ENCODE measurements at regions of chr22 and their contacts with region 1.

Region 1: GRCh38 chr22:17501679-17502285 is 61.5 kb upstream of the SLC25A18 start:
- DNase-seq: no peak
- ATAC-seq: peak; percentile 77 to 90
- H3K4me3 ChIP-seq: no peak overlapping the region
- H3K27ac ChIP-seq: peak overlapping the region; percentile 20 to 52 (median 32)
- H3K4me1 ChIP-seq: peaks cover 4 to 10% of the 10 kb centered on the region in 2 donors
- H3K27me3 ChIP-seq: no peaks in the 10 kb centered on the region
- CTCF ChIP-seq: peak; percentile 71 to 77 (median 74)
- POLR2A ChIP-seq: no peak

Region 2: DNA sequence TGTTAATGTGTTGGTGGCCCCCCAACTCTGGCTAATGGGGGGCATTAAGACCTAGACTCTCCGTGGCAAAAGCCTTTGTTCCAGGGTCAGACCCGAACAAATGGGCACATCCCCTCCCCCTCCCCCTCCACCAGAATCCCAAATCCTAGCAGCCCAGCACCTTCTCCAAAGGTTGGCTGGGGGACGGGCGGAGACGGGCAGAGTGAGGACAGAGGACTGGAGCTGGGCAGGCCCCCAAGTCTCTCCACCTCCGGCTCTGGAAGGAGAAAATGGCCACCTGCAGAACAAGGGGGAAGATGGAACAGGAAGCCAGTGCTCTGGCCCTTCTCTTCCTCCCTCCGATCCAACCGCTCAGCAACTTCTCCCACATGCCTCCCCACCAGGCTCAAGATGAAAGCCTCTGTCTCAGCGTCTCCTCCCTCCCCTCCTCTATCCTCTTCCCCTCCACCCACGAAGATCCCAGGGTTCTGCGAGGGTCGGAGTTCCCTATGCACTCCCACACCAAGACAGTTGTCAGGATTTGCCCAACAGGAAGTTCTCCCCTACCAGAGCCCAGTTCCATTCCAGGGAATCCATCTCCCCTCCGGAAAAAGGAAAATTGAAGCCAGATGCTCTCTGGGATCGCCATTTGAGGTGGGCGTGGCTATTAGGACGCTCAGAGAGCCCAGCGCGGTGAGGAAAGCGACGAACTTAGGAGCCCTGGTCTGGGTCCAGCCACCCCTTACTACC is 302.6 kb before region 1 on chr22:
- in situ Hi-C with region 1: loop called in 3 of 4 experiments (anchors 10 to 25 kb)
- intact Hi-C with region 1: no loop called
- DNase-seq: peak; percentile 13 to 22
- ATAC-seq: peak; percentile 60 to 64
- H3K4me3 ChIP-seq: peak overlapping the region; percentile 25 to 53 (median 38)
- H3K27ac ChIP-seq: peak overlapping the region; percentile 27 to 76 (median 66)
- H3K4me1 ChIP-seq: no peaks in the 10 kb centered on the region
- H3K27me3 ChIP-seq: no peaks in the 10 kb centered on the region
- CTCF ChIP-seq: no peak
- POLR2A ChIP-seq: no peak

Region 3: DNA sequence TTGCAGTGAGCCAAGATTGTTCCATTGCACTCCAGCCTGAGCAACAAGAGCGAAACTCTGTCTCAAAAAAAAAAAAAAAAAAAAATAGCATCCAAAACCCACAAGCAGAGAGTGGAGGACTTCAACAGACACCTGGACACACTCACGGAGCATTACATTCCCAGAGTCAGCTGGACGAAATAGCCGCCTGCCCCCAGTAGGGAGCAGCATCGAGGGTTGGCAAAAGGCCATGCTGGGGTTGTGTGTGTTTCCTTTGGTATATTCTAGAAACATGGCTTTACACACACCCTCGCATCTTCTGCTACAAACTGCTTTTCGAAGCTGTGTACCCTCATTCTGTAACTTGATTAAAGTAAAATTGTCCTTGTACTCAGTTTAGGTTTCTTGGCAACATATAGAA is 287.8 kb before region 1 on chr22:
- in situ Hi-C with region 1: loop called in 3 of 4 experiments (anchors 10 to 25 kb)
- intact Hi-C with region 1: loop called (anchors 1 kb)
- DNase-seq: peak; percentile 60 to 73
- ATAC-seq: peak; percentile 70 to 94
- H3K4me3 ChIP-seq: no peak overlapping the region
- H3K27ac ChIP-seq: no peak overlapping the region
- H3K4me1 ChIP-seq: no peaks in the 10 kb centered on the region
- H3K27me3 ChIP-seq: no peaks in the 10 kb centered on the region
- CTCF ChIP-seq: peak; percentile 36 to 58 (median 52)
- POLR2A ChIP-seq: no peak

Region 4: GRCh38 chr22:17266251-17266971 is 235.4 kb before region 1 on chr22:
- in situ Hi-C with region 1: no loop called
- intact Hi-C with region 1: loop called (anchors 5 kb)
- DNase-seq: peak; percentile 13 to 71
- ATAC-seq: peak; percentile 14 to 26
- H3K4me3 ChIP-seq: no peak overlapping the region
- H3K27ac ChIP-seq: peak overlapping the region; percentile 93 to 98 (median 95)
- H3K4me1 ChIP-seq: peaks cover 32 to 43% of the 10 kb centered on the region in 2 donors
- H3K27me3 ChIP-seq: no peaks in the 10 kb centered on the region
- CTCF ChIP-seq: no peak
- POLR2A ChIP-seq: no peak